Transverse colon (tissue), 4 donors: ENCODE measurements at regions of chr4 and their contacts with region 1.

Region 1: GRCh38 chr4:127732613-127733328 is 2.6 kb downstream of the SLC25A31 start:
- DNase-seq: no peak
- H3K4me3 ChIP-seq: no peak overlapping the region
- H3K27ac ChIP-seq: no peak overlapping the region
- H3K4me1 ChIP-seq: no peaks in the 10 kb centered on the region
- H3K27me3 ChIP-seq: no peaks in the 10 kb centered on the region
- CTCF ChIP-seq: peak in 4 of 5 experiments; percentile 26 to 55 (median 48)
- EP300 ChIP-seq: no peak
- POLR2A ChIP-seq: no peak

Region 2: DNA sequence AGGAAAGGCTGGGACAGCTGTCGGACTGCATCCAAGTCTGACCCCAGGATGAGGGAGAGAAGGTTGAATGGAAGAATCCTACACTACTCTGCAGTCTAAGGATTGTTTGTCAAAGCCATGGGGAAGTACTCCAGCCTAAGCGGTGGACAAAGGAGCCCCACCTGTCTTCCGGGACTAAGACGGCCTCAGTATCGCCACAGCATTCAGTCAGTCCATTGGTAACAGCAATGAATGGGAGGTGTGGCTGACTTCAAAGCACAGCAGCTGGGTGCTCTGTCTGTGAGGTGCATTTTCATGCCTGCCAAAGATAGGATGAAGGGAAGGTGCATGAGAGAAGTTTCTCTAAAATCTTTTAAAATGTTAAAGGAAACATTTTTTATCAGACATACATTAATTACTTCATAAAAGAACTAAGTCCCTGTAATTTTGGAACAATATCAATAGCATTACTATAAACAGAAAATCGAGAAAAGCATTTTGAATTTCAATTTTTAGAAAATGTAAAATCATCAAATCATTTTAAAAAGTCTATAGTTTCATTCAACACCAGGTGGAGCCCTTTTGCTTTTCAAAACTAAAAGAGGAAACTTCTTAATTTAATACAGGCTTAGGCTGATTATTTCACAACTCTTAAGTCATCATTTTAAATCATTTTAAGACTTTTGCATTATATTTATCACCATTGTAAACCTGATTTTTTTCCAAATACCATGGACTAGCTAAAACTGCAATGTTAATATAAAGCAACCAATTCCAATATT is 127.6 kb before region 1 on chr4:
- in situ Hi-C with region 1: loop called (anchors 10 to 25 kb)
- intact Hi-C with region 1: loop called (anchors 5 kb)
- DNase-seq: no peak
- H3K4me3 ChIP-seq: no peak overlapping the region
- H3K27ac ChIP-seq: no peak overlapping the region
- H3K4me1 ChIP-seq: no peaks in the 10 kb centered on the region
- H3K27me3 ChIP-seq: no peaks in the 10 kb centered on the region
- CTCF ChIP-seq: peak; percentile 36 to 59 (median 45)
- EP300 ChIP-seq: no peak
- POLR2A ChIP-seq: no peak

Region 3: DNA sequence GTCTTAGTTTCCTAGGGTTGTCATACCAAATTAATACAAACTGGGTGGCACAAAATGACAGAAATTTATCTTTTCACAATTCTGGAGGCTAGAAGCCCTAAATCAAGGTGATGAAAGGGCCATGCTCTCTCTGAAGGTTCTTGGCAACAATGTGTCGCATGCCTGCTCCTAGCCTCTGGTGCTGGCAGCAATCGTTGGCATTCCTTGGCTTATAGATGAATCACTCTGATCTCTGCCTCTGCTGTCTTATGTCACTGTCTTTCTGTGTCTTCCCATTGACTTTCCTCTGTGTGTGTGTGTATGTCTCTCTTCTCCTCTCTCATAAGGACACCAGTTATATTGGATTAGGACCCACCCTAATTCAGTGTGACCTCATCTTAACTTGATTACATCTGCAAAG is 115.9 kb before region 1 on chr4:
- in situ Hi-C with region 1: loop called (anchors 10 to 25 kb)
- intact Hi-C with region 1: no loop called
- DNase-seq: no peak
- H3K4me3 ChIP-seq: no peak overlapping the region
- H3K27ac ChIP-seq: no peak overlapping the region
- H3K4me1 ChIP-seq: no peaks in the 10 kb centered on the region
- H3K27me3 ChIP-seq: peaks cover 28% of the 10 kb centered on the region
- CTCF ChIP-seq: no peak
- EP300 ChIP-seq: no peak
- POLR2A ChIP-seq: no peak

Region 4: DNA sequence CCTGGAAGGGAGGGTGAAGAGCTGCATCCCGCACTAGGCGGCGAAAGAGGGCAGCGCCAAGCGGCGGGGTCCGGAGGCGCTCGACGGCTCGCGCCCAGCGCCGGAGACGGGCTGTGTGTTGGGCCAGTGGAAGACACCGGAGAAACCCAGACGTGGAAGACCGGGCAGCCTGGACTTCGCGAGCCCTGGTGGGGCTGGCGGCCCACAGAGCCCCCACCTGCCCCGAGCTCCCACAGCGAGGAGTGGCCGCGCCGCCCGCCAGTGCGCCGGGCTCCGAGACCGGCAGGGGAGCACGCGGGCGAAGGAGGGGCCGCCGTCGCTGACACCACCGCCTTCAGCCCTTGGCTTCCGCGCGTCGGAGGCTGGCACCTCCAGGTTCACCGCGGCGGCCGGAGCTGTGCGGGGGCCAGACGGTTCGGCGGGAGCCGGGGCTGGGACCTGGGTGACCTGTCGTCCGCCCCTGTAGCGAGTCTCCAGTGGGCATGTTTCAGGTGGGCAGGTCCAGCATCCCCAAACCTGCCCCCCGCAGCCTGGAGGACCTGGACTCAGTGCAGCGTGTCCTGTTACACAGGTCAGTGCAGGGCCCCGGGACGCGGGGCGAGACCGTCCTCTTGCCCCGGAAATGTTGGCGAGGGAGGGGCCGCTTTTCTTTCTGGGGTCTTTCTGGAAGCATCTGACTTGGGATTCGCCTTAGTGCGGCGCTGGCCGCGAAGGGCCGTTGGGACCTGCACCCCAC is 109.7 kb before region 1 on chr4:
- in situ Hi-C with region 1: loop called (anchors 10 to 25 kb)
- intact Hi-C with region 1: no loop called
- DNase-seq: peak; percentile 13
- H3K4me3 ChIP-seq: peak overlapping the region; percentile 33 to 55 (median 46)
- H3K27ac ChIP-seq: peak overlapping the region; percentile 21 to 45 (median 42)
- H3K4me1 ChIP-seq: peaks cover 0 to 19% (median 11%) of the 10 kb centered on the region in 4 donors
- H3K27me3 ChIP-seq: peaks cover 66% of the 10 kb centered on the region
- CTCF ChIP-seq: peak in 2 of 5 experiments; percentile 13 to 16
- EP300 ChIP-seq: no peak
- POLR2A ChIP-seq: no peak